Posterior vena cava (tissue), 2 donors: ENCODE measurements at regions of chr1 and their contacts with region 1.

Region 1: DNA sequence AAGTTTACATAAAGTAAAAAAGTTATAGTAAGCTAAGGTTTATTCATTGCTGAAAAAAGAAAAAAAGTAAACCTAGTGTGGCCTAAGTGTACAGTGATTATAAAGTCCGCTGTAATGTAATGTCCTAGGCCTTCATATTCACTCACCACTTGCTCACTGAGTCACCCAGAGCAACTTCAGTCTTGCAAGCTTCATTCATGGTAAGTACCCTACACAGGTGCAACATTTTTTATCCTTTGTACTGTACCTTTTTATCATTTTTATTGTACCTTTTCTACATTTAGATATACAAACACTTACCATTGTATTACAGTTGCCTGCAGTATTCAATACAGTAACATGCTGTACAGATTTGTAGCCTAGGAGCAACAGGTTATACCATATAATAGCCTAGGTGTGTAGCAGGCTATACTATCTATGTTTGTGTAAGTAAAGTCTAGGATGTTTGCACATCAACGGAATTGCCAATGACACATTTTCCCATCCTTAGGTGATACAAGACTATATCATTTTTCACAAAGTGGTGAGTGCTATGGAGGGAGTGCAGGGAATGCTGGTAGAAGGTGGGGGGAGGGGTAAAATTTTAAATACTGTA is 58.0 kb upstream of the DMRTA2 start:
- DNase-seq: no peak

Region 2: DNA sequence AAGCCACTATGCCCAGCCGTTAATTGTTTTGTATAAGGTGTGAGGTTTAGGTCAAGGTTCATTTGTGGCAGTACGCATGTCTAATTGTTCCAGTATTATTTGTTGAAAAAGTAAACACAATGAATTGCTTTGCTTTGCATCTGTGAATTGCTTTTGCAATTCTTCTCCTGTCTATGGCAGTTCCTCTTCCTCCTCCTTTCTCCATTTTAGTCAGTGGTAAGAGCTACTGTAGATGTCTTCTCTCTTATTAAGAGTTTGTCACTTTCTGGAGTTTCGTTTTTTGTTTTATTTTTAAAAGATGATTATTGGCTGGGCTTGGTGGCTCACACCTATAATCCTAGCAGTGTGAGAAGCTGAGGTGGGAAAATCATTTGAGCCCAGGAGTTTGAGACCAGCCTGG is 649.9 kb after region 1 on chr1:
- intact Hi-C with region 1: loop called in 1 of 2 experiments (anchors 5 kb)
- DNase-seq: no peak